Endothelial cell of umbilical vein (primary cell): ENCODE measurements at regions of chr1 and their contacts with region 1.

Region 1: DNA sequence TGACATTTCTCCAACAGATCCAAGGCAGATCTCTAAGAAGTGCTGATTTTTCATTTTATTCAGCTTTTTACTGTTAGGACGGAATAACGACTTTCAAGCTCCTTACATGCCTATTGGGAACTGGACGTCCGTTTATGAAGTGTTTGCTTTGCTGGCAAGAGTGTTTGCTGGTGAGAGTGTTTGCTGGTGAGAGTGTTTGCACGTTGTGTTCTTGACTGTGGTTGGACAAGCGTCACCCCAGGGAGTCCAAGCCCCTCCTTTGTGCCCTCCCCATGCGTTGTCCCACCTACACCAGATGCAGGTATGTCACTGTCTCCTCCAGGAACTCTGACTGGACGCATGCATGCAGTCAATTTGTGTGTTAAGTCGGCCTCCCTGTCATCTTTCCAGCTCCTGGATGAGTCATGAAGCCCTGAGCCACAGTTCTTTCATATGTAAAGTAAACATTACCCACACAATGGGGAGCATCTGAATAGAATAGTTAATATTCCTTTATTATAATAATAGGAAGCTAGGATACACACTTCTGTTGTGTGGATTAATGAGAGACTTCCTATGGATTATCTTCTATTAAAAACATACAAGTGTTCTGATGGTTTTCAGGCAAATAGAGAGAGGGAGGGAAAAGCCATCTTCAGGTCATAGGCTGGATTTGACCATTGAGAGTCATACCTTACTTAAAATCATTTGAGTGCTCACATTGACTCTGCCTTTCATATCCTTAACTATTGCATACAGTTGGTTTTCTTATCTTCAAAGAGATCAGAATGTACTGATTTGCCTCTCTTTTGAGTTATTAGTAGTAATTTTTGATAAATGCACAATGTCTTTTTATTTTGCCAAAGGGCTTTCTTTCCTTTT is 119.2 kb downstream of the GALNT2 start:
- DNase-seq: peak; percentile 92
- H3K4me3 ChIP-seq: no peak overlapping the region
- H3K27ac ChIP-seq: peak overlapping the region; percentile 10
- H3K4me1 ChIP-seq: peaks cover 25% of the 10 kb centered on the region
- H3K27me3 ChIP-seq: no peaks in the 10 kb centered on the region
- CTCF ChIP-seq: no peak
- POLR2A ChIP-seq: no peak

Region 2: GRCh38 chr1:229940684-229941083 is 245.5 kb before region 1 on chr1:
- CTCF ChIA-PET with region 1: no interaction called
- POLR2A ChIA-PET with region 1: no interaction called
- dilution Hi-C with region 1: no loop called
- intact Hi-C with region 1: no loop called
- DNase-seq: no peak
- H3K4me3 ChIP-seq: no peak overlapping the region
- H3K27ac ChIP-seq: no peak overlapping the region
- H3K4me1 ChIP-seq: no peaks in the 10 kb centered on the region
- H3K27me3 ChIP-seq: no peaks in the 10 kb centered on the region
- CTCF ChIP-seq: no peak
- POLR2A ChIP-seq: no peak

Region 3: GRCh38 chr1:230084138-230084880 is 101.9 kb before region 1 on chr1:
- CTCF ChIA-PET with region 1: no interaction called
- POLR2A ChIA-PET with region 1: no interaction called
- dilution Hi-C with region 1: no loop called
- intact Hi-C with region 1: loop called (anchors 5 kb)
- DNase-seq: peak; percentile 75
- H3K4me3 ChIP-seq: no peak overlapping the region
- H3K27ac ChIP-seq: peak overlapping the region; percentile 75
- H3K4me1 ChIP-seq: peaks cover 20% of the 10 kb centered on the region
- H3K27me3 ChIP-seq: no peaks in the 10 kb centered on the region
- CTCF ChIP-seq: no peak
- POLR2A ChIP-seq: no peak

Region 4: DNA sequence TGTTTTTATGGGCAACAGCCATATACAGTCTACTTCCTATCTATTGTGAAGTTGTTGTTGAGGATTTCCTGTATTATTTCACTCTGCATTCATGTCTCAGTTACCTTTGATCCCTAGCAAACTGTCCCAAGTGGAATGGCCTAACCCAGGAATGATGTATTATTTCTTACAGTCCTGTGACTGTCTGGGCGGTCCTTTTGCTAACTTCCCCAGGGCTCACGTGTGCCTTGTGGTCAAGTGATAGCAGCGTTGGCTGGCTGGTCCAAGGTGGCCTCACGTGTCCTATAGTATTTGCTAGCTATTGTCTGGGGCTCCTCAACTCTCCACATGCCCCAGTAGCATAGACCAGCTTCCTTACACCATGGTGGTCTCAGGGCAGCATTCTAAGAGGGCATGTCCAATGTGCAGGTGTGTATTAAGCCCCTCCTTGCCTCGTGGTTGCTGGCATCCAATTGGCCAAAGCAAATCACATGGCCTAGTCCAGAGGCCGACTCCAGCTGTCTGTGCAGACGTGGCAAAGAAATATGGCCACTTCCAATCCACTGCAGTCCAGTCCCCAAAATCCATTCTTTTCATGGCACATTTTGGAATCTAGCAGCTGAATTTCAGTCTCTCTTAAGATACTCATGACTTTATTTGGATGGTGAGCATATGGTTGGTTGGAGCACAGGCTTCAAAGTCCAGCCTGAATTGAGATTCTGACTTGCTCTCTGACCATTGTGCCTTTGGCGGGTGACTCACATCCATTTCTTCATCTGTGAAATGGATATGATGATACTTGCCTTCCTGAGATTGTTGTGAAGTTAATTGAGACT is 25.1 kb before region 1 on chr1:
- CTCF ChIA-PET with region 1: no interaction called
- POLR2A ChIA-PET with region 1: no interaction called
- dilution Hi-C with region 1: no loop called
- intact Hi-C with region 1: loop called (anchors 2 kb)
- DNase-seq: peak; percentile 93
- H3K4me3 ChIP-seq: no peak overlapping the region
- H3K27ac ChIP-seq: no peak overlapping the region
- H3K4me1 ChIP-seq: peaks cover 15% of the 10 kb centered on the region
- H3K27me3 ChIP-seq: peaks cover 0 to 5% of the 10 kb centered on the region in 2 experiments
- CTCF ChIP-seq: no peak
- POLR2A ChIP-seq: no peak